ENCODE measurements at regions of chr6 and their contacts with region 1.

Region 1: GRCh38 chr6:72084992-72085569 is 198.7 kb downstream of the RIMS1 start:
- DNase-seq: peak; percentile 24
- H3K4me3 ChIP-seq: no peak overlapping the region
- H3K27ac ChIP-seq: no peak overlapping the region
- H3K4me1 ChIP-seq: no peaks in the 10 kb centered on the region
- H3K27me3 ChIP-seq: peaks cover 0 to 4% of the 10 kb centered on the region in 2 experiments
- CTCF ChIP-seq: peak; percentile 8 to 18
- POLR2A ChIP-seq: no peak

Region 2: GRCh38 chr6:71533939-71534379 is 551.1 kb before region 1 on chr6:
- CTCF ChIA-PET with region 1: interaction called, 22 read pairs
- POLR2A ChIA-PET with region 1: no interaction called
- dilution Hi-C with region 1: no loop called
- intact Hi-C with region 1: loop called (anchors 1 kb)
- DNase-seq: peak; percentile 36
- H3K4me3 ChIP-seq: no peak overlapping the region
- H3K27ac ChIP-seq: no peak overlapping the region
- H3K4me1 ChIP-seq: no peaks in the 10 kb centered on the region
- H3K27me3 ChIP-seq: peaks cover 9 to 14% of the 10 kb centered on the region in 2 experiments
- CTCF ChIP-seq: peak; percentile 33 to 42
- POLR2A ChIP-seq: no peak

Region 3: DNA sequence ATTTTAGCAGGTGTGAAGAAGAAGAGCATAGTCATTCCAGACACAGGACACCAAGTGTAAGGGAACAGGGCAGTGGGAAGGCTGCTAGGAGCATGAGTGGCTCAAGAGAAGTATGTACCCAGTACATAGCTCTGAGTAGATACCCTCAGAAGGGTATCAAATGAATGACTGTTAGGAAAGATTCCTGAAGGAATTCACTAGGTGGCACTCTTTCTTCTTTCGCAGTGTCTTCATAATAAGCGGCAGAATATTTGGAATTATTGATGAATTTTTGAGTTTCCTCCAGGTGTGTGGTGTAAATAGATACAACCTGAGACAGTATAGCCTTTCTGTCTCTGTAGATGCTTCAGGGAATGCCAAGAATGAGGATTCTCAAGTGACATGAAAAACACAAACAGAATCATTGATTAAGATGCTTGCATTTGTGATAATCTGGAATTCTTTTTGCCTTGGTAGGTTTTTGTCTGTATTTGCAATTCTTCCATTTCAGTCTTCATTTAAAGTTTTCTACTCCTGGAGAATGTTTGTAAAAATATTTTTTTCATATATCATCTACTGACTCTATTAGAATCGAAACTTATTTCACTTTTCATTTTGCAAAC is 463.1 kb before region 1 on chr6:
- CTCF ChIA-PET with region 1: interaction called, 7 read pairs
- POLR2A ChIA-PET with region 1: no interaction called
- dilution Hi-C with region 1: no loop called
- intact Hi-C with region 1: loop called (anchors 1 kb)
- DNase-seq: peak; percentile 28
- H3K4me3 ChIP-seq: no peak overlapping the region
- H3K27ac ChIP-seq: no peak overlapping the region
- H3K4me1 ChIP-seq: no peaks in the 10 kb centered on the region
- H3K27me3 ChIP-seq: peaks cover 6 to 10% of the 10 kb centered on the region in 2 experiments
- CTCF ChIP-seq: peak; percentile 22 to 33
- POLR2A ChIP-seq: no peak

Region 4: GRCh38 chr6:72002415-72002814 is 82.7 kb before region 1 on chr6:
- CTCF ChIA-PET with region 1: no interaction called
- POLR2A ChIA-PET with region 1: no interaction called
- dilution Hi-C with region 1: no loop called
- intact Hi-C with region 1: no loop called
- DNase-seq: no peak
- H3K4me3 ChIP-seq: no peak overlapping the region
- H3K27ac ChIP-seq: no peak overlapping the region
- H3K4me1 ChIP-seq: no peaks in the 10 kb centered on the region
- H3K27me3 ChIP-seq: no peaks in the 10 kb centered on the region
- CTCF ChIP-seq: no peak
- POLR2A ChIP-seq: no peak

Measured in endothelial cell of umbilical vein (primary cell).